Naive thymus-derived CD4-positive, alpha-beta T cell (primary cell): ENCODE measurements at regions of chr11 and their contacts with region 1.

Region 1: DNA sequence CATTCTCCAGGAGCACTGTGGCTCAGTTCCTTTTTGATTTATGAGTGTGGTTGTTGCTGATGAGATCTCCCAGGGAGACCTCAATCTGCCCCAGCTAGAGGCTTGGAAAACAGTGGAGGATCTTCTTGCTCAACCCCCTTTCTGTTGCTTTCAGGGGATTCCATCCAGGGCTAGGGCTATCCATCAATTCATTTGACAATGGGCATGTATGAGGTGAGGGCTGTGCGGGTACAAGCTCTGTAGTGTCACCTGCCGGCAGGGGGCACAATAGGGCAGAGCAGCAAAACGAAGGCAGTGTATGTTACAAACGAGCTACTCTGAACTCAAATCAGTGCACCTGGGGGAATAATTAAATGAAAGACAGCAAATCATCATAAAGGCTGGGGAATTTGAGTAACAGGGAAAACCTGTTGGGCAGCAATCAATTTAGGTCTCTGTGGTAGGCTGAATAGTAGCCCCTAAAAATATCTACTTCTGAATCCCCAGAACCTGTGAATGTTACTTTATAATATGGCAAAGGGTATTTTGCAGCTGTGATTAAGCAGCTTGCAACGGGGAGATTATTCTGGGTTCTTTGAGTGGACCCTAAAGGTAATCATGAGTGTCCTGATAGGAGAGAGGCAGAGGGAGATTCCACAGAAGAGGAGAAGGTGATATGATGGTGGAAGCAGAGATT is 170.3 kb upstream of the ZBED5 start:
- DNase-seq: peak; percentile 59 to 82 (median 72)
- ATAC-seq: peak; percentile 97
- H3K4me3 ChIP-seq: no peak overlapping the region
- H3K4me3 Mint-ChIP-seq: no peak overlapping the region
- H3K27ac ChIP-seq: no peak overlapping the region
- H3K27ac Mint-ChIP-seq: peak overlapping the region in 5 of 9 donors; percentile 2 to 26 (median 12)
- H3K4me1 ChIP-seq: no peaks in the 10 kb centered on the region
- H3K4me1 Mint-ChIP-seq: peaks cover 0 to 6% (median 0%) of the 10 kb centered on the region in 7 donors
- H3K27me3 ChIP-seq: no peaks in the 10 kb centered on the region
- H3K27me3 Mint-ChIP-seq: peaks cover 0 to 32% (median 0%) of the 10 kb centered on the region in 5 donors

Region 2: DNA sequence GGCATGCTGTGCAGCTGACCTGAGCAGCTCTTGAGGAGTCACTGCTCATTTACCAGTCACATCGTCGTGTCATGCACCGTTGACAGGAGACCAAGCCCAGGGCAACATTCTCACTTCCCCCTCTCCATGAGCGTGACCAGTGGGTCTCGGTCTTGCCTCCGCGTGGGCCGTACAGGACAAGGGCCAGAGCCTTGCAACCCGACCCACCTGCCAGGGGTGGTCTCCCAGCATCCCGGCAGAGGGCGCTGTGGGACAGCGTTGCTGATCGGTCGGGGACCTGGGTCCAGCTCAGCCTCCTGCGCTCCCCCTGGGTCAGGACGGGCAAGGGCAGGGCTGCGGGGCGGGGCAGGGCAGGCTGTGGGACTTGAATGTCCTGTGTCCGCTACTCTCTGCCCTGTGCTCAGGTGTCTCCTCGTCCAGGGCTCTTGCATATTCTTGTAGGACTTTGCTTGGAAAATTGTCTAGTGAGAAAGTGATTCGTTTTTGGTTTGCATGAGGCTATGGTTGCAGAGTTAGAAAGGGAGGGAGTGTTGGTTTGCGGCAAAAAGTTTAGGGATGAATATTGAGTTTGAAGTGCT is 235.7 kb before region 1 on chr11:
- CTCF ChIA-PET with region 1: interaction called, 42 read pairs
- POLR2A ChIA-PET with region 1: interaction called, 4 read pairs
- intact Hi-C with region 1: no loop called
- DNase-seq: peak; percentile 58 to 90 (median 77)
- ATAC-seq: peak; percentile 89
- H3K4me3 ChIP-seq: peak overlapping the region; percentile 40
- H3K4me3 Mint-ChIP-seq: peak overlapping the region in 6 of 10 donors; percentile 1 to 37 (median 16)
- H3K27ac ChIP-seq: no peak overlapping the region
- H3K27ac Mint-ChIP-seq: peak overlapping the region in 2 of 9 donors; percentile 15 to 24
- H3K4me1 ChIP-seq: peaks cover 4 to 20% of the 10 kb centered on the region in 2 donors
- H3K4me1 Mint-ChIP-seq: peaks cover 14 to 26% (median 23%) of the 10 kb centered on the region in 7 donors
- H3K27me3 ChIP-seq: no peaks in the 10 kb centered on the region
- H3K27me3 Mint-ChIP-seq: peaks cover 0 to 23% (median 8%) of the 10 kb centered on the region in 5 donors

Region 3: DNA sequence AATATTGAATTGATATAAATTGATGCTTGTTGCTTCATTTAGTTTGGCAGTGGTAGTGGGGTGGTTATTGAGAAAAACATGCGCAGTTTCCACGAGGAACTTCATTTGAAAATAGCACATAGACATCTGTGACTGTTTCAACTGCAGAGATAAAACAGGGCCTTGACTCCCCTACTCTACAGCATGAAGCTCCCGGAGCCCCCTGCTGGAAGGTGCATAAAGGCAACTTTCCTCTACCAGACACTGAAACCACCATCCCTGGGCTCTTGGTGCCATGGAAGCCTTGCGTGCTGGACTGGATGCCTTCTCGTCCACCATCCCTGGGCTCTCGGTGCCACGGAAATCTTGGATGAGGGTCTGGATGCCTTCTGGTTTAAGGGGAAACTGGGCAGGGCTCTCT is 129.0 kb after region 1 on chr11:
- CTCF ChIA-PET with region 1: interaction called, 269 read pairs
- POLR2A ChIA-PET with region 1: interaction called, 13 read pairs
- intact Hi-C with region 1: loop called (anchors 1 to 2 kb)
- DNase-seq: peak in 8 of 9 donors; percentile 28 to 79 (median 72)
- ATAC-seq: peak; percentile 75
- H3K4me3 ChIP-seq: no peak overlapping the region
- H3K4me3 Mint-ChIP-seq: peak overlapping the region in 6 of 10 donors; percentile 75 to 92 (median 84)
- H3K27ac ChIP-seq: peak overlapping the region; percentile 72
- H3K27ac Mint-ChIP-seq: peak overlapping the region in 8 of 9 donors; percentile 86 to 99 (median 94)
- H3K4me1 ChIP-seq: peaks cover 11 to 28% of the 10 kb centered on the region in 2 donors
- H3K4me1 Mint-ChIP-seq: peaks cover 15 to 49% (median 44%) of the 10 kb centered on the region in 7 donors
- H3K27me3 ChIP-seq: no peaks in the 10 kb centered on the region
- H3K27me3 Mint-ChIP-seq: peaks cover 0 to 8% (median 0%) of the 10 kb centered on the region in 5 donors

Region 4: DNA sequence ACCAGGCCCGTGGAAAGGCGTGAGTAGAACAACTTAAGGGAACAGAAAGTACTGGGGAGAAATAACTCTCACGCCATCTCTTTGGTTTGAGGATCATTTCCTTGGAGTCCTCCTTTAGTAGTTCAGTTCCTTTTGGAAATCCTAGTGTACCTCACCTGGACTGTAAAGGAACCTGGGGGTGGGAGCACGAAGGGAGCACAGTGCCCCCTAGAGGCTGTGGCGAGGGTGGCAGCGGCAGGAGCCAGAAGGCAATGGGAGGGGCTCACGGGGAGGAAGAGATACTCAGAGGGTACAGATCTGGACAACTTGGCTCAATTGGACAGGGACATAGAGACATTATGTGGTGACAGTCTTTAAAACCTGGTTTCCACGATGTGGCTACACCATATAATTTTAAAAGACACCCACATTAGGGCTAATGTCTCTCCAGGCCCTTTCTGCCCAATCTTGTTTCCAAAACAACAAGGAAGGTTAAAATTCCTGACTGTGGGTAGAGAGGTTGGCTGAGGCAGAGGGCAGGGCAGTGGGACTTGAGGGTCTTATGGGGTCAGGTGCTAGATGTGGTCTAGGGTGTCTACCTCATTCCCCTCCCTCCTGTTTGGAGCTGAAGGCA is 237.9 kb after region 1 on chr11:
- CTCF ChIA-PET with region 1: interaction called, 7 read pairs
- POLR2A ChIA-PET with region 1: no interaction called
- intact Hi-C with region 1: loop called (anchors 1 kb)
- DNase-seq: peak in 8 of 9 donors; percentile 11 to 68 (median 28)
- ATAC-seq: peak; percentile 66
- H3K4me3 ChIP-seq: no peak overlapping the region
- H3K4me3 Mint-ChIP-seq: no peak overlapping the region
- H3K27ac ChIP-seq: no peak overlapping the region
- H3K27ac Mint-ChIP-seq: no peak overlapping the region
- H3K4me1 ChIP-seq: no peaks in the 10 kb centered on the region
- H3K4me1 Mint-ChIP-seq: peaks cover 0 to 3% (median 0%) of the 10 kb centered on the region in 7 donors
- H3K27me3 ChIP-seq: no peaks in the 10 kb centered on the region
- H3K27me3 Mint-ChIP-seq: peaks cover 0 to 11% (median 8%) of the 10 kb centered on the region in 5 donors

Region 5: DNA sequence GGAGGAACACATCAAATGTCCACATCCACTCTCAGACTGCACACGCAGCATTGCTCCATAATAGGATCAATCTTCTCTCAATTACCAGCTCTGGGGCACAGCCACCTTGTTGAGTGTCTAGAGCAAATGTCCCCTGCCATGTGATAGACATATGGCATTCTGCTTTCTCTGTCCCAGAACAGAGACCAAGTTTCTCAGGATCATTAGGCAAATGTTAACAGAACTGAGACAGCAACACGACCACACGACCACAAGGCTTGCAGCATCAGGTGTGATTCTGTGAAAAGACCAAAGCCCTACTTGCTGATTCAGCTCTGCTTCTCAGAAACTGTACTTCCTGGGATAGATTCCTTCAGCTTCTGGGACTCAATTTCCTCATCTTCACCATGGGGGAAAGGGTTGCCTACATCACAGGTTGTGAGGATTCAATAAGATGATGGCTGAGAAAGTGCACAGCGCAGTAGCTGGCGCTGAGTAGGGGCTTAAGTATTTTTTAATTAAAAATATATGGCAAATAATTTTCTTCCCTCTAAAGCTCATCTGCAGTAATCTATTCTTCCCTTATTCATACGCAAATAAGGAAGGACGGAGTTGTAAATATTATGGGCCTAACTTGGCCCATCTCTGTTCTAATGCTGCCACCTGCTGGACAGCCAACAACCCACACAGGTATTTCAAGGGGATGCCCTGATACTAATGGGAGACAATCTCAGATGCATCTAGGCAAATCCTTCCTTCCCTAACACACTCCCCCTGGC is 759.3 kb after region 1 on chr11:
- CTCF ChIA-PET with region 1: interaction called, 40 read pairs
- POLR2A ChIA-PET with region 1: interaction called, 4 read pairs
- intact Hi-C with region 1: loop called (anchors 1 kb)
- DNase-seq: peak; percentile 34 to 69 (median 58)
- ATAC-seq: peak; percentile 88
- H3K4me3 ChIP-seq: no peak overlapping the region
- H3K4me3 Mint-ChIP-seq: no peak overlapping the region
- H3K27ac ChIP-seq: no peak overlapping the region
- H3K27ac Mint-ChIP-seq: no peak overlapping the region
- H3K4me1 ChIP-seq: no peaks in the 10 kb centered on the region
- H3K4me1 Mint-ChIP-seq: peaks cover 0 to 4% (median 0%) of the 10 kb centered on the region in 7 donors
- H3K27me3 ChIP-seq: peaks cover 0 to 4% of the 10 kb centered on the region in 2 donors
- H3K27me3 Mint-ChIP-seq: peaks cover 5 to 24% (median 9%) of the 10 kb centered on the region in 5 donors

Region 6: GRCh38 chr11:12043959-12044819 is 1016.0 kb after region 1 on chr11:
- CTCF ChIA-PET with region 1: no interaction called
- POLR2A ChIA-PET with region 1: no interaction called
- intact Hi-C with region 1: loop called (anchors 2 to 10 kb)
- DNase-seq: peak; percentile 17 to 64 (median 44)
- ATAC-seq: peak; percentile 74
- H3K4me3 ChIP-seq: no peak overlapping the region
- H3K4me3 Mint-ChIP-seq: no peak overlapping the region
- H3K27ac ChIP-seq: no peak overlapping the region
- H3K27ac Mint-ChIP-seq: peak overlapping the region in 1 of 9 donors; percentile 58
- H3K4me1 ChIP-seq: peaks cover 0 to 3% of the 10 kb centered on the region in 2 donors
- H3K4me1 Mint-ChIP-seq: peaks cover 0 to 9% (median 0%) of the 10 kb centered on the region in 7 donors
- H3K27me3 ChIP-seq: no peaks in the 10 kb centered on the region
- H3K27me3 Mint-ChIP-seq: peaks cover 0 to 7% (median 0%) of the 10 kb centered on the region in 5 donors